ENCODE measurements at regions of chr5 and their contacts with region 1.

Region 1: DNA sequence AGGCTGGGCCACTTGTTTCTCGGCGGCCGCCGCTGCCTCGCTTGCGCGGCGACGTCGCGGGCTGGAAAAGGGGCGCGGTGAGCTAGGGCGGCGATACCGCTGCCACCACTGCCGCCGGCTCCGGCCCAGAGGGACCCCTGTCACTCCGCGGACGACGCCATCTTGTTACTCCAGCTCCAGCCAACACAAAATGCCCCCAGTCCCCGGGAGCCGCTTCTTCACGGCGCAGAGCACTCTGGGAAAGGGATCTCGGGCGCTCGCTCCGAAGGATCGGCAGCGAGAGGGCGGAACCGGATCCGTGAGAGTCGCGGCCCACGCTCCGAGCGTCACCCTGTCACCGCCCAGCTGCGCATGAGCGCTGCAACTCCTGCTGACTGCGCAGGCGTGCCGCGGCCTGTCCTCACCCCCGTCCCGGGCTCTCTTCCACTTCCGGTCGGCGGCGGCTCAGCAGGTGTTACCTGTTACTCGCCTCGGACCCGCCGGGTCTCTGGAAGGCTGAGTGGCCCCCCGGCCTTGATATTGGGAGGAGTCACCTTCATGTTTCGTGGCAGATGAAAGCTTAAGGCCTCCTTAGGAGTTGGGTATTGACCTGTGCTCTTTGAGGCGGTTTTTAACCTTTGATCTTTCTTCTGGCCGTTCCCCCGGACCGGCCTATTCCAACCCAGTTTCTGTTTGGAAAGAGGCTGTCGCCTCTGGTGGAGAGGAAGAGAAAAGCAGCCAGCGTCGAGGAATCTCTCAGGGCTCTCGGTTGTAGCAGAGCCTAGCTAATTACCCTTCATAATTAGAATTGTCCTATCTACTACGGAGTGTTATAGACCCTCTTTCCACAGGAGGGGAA is at the start of gene CSNK1A1:
- DNase-seq: peak; percentile 99
- H3K4me3 ChIP-seq: peak within 1 kb of the TSS; percentile 91
- H3K27ac ChIP-seq: peak within 1 kb of the TSS; percentile 98
- H3K4me1 ChIP-seq: peaks cover 58% of the 10 kb centered on the region
- H3K27me3 ChIP-seq: no peaks in the 10 kb centered on the region
- CTCF ChIP-seq: peak; percentile 85
- total RNA-seq, gene CSNK1A1: 180 TPM

Region 2: GRCh38 chr5:149442563-149443182 is 108.7 kb before region 1 on chr5:
- intact Hi-C with region 1: loop called (anchors 5 kb)
- DNase-seq: peak; percentile 85
- H3K4me3 ChIP-seq: no peak overlapping the region
- H3K27ac ChIP-seq: peak overlapping the region; percentile 91
- H3K4me1 ChIP-seq: peaks cover 52% of the 10 kb centered on the region
- H3K27me3 ChIP-seq: no peaks in the 10 kb centered on the region
- CTCF ChIP-seq: peak; percentile 91